Ascending aorta (tissue), 2 donors: ENCODE measurements at regions of chr7 and their contacts with region 1.

Region 1: GRCh38 chr7:52980129-52980528 is 55.3 kb upstream of the POM121L12 start:
- DNase-seq: no peak
- H3K4me3 ChIP-seq: no peak overlapping the region
- H3K27ac ChIP-seq: no peak overlapping the region
- H3K4me1 ChIP-seq: no peaks in the 10 kb centered on the region
- H3K27me3 ChIP-seq: no peaks in the 10 kb centered on the region
- CTCF ChIP-seq: no peak

Region 2: GRCh38 chr7:52940481-52940880 is 39.6 kb before region 1 on chr7:
- intact Hi-C with region 1: no loop called
- DNase-seq: no peak
- H3K4me3 ChIP-seq: no peak overlapping the region
- H3K27ac ChIP-seq: no peak overlapping the region
- H3K4me1 ChIP-seq: no peaks in the 10 kb centered on the region
- H3K27me3 ChIP-seq: no peaks in the 10 kb centered on the region
- CTCF ChIP-seq: no peak

Region 3: DNA sequence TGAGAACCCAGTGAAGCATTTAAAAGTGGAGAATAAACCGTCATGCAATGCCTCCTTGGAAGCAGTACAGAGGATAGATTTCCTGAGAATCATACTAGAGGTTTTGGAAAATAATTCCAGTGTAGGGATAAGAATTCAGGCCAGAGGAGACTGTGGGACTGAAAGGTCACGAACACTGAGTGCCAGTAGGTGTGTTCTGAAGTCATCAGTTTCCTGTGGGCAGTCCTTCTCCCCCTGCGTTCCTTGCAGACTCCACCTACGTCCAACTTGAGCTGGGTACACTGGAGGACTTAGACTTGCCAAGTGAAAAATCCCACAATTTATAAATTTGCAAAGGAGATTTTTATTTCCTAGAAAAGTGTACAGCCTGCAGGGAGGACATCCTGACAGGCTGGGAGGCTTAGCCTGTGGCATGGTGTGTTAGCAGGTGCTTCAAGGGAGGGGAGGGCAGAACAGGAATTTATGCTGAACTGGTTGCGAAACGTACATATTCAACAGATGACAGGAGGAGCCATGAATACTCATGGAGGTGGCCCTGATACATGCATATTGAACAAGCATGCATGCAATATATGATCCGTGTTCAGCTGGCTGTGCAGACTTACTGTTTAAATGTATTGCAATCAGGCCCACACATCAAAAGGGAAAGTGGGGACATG is 17.6 kb before region 1 on chr7:
- intact Hi-C with region 1: loop called (anchors 1 kb)
- DNase-seq: no peak
- H3K4me3 ChIP-seq: no peak overlapping the region
- H3K27ac ChIP-seq: peak overlapping the region; percentile 42 to 73
- H3K4me1 ChIP-seq: peaks cover 0 to 24% of the 10 kb centered on the region in 2 donors
- H3K27me3 ChIP-seq: no peaks in the 10 kb centered on the region
- CTCF ChIP-seq: no peak